HEK293 (cell line): ENCODE measurements at regions of chr18 and their contacts with region 1.

Region 1: DNA sequence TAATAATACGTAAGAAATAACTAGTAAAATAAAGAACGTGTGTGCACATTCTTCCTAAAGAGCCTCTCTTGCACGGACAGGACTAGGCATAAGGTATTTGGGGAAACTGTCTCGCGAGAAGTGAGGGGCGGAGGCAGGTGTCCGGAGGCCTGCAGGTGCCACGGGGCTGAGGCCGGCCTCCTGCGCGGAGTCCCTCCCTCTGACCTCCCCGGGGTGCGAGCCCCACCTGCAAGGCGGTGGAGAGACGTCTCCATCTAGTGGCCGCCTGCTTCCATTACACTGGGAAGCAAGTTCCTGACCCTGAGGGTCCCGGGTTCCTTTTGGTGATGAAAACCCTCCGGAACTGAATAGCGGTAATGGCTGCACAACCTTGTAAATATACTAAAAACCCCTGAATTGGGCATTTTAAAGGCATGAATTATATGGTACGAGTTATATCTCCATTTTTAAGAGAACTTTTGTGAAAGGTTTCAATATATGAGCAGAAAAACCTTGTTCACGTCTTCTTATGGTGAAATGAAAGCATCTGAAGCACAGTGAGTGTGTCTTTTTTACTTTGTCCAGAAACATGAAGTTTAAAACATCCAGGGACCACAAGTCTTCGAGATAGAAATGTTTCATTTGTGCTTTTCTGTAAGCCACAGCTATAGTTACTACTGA is 35.5 kb upstream of the CTDP1 start:
- H3K4me3 ChIP-seq: no peak overlapping the region
- H3K27ac ChIP-seq: no peak overlapping the region
- H3K4me1 ChIP-seq: no peaks in the 10 kb centered on the region; the same call in 1 of the 2 replicates
- CTCF ChIP-seq: peak; percentile 87

Region 2: GRCh38 chr18:79528846-79529245 is 115.3 kb before region 1 on chr18:
- CTCF ChIA-PET with region 1: interaction called, 14 read pairs
- POLR2A ChIA-PET with region 1: no interaction called
- H3K4me3 ChIP-seq: no peak overlapping the region
- H3K27ac ChIP-seq: no peak overlapping the region
- H3K4me1 ChIP-seq: no peaks in the 10 kb centered on the region
- CTCF ChIP-seq: peak; percentile 59; the same call in 1 of the 2 replicates

Region 3: GRCh38 chr18:79708412-79708811 is 64.3 kb after region 1 on chr18:
- CTCF ChIA-PET with region 1: no interaction called
- POLR2A ChIA-PET with region 1: no interaction called
- H3K4me3 ChIP-seq: no peak overlapping the region
- H3K27ac ChIP-seq: no peak overlapping the region
- H3K4me1 ChIP-seq: no peaks in the 10 kb centered on the region
- CTCF ChIP-seq: no peak